ENCODE measurements at regions of chr1 and their contacts with region 1.

Region 1: DNA sequence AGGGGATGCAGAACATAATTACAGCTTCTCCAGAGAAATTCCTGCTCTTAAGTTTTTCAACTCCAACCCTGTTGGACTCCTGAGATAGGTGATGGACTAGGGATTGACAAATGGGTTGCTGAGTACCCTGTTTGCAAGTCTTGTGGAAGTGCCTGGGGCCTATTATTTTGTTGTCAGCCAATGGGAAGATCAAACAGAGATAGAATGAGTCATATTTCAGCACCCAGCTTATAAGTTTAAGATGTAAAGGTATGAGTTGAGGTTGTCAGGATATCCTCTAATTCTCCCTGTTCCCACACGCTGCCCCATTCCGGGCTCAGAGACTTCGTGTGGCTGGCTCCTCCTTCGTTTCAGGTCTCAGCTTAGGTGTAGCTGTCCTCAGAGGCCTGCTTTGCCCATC is 91.8 kb downstream of the CENPF start:
- DNase-seq: no peak
- H3K4me3 ChIP-seq: no peak overlapping the region
- H3K27ac ChIP-seq: no peak overlapping the region
- H3K4me1 ChIP-seq: no peaks in the 10 kb centered on the region
- H3K27me3 ChIP-seq: no peaks in the 10 kb centered on the region
- CTCF ChIP-seq: no peak
- EP300 ChIP-seq: no peak
- POLR2A ChIP-seq: no peak

Region 2: GRCh38 chr1:214514032-214514818 is 180.5 kb before region 1 on chr1:
- in situ Hi-C with region 1: no loop called
- intact Hi-C with region 1: no loop called
- DNase-seq: no peak
- H3K4me3 ChIP-seq: no peak overlapping the region
- H3K27ac ChIP-seq: no peak overlapping the region
- H3K4me1 ChIP-seq: peaks cover 0 to 26% (median 12%) of the 10 kb centered on the region in 4 donors
- H3K27me3 ChIP-seq: no peaks in the 10 kb centered on the region
- CTCF ChIP-seq: no peak
- EP300 ChIP-seq: no peak
- POLR2A ChIP-seq: no peak

Region 3: GRCh38 chr1:214719207-214719606 is 24.5 kb after region 1 on chr1:
- in situ Hi-C with region 1: no loop called
- intact Hi-C with region 1: loop called (anchors 2 kb)
- DNase-seq: no peak
- H3K4me3 ChIP-seq: no peak overlapping the region
- H3K27ac ChIP-seq: no peak overlapping the region
- H3K4me1 ChIP-seq: no peaks in the 10 kb centered on the region
- H3K27me3 ChIP-seq: no peaks in the 10 kb centered on the region
- CTCF ChIP-seq: no peak
- EP300 ChIP-seq: no peak
- POLR2A ChIP-seq: no peak

Measured in transverse colon (tissue), 4 donors.